CD8-positive, alpha-beta T cell (primary cell): ENCODE measurements at regions of chr18 and their contacts with region 1.

Region 1: DNA sequence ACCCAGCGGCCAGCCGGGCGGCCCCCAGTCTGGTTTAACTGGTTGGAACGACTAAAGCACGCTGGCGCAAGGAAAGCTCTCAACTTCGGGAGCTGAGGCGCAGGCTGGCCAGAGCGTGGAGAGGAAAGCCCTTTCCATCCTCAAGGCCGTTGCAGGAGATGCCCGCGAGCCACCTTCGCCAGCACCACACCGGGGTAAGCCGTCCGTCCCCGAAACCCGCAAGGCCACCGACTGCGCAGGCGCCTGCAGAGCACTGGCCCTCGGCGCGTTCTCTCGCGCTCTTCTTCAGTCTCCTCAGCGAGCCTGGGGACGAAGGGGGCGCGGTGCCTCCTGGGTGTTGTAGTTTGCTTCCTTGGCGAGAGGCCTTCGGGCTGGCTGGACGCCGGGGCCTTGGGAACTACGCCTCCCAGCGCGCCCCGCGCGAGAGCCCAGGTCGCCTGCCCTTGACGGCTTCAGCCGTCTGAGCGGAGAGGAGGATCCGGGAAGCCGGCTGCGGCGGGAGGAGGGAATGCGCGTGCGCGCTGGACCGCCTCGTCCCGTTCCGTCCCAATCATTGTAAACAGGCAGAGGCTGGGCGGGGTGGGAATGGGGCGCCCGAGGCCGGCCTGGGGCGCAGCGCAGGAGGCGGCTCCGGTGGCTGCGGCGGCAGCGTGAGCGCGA is at the start of gene RALBP1:
- DNase-seq: peak; percentile 96 to 99 (median 97)
- ATAC-seq: peak; percentile 98
- H3K4me3 ChIP-seq: peak within 1 kb of the TSS; percentile 90 to 93
- H3K4me3 Mint-ChIP-seq: peak within 1 kb of the TSS; percentile 98
- H3K27ac ChIP-seq: peak within 1 kb of the TSS; percentile 67 to 86
- H3K27ac Mint-ChIP-seq: peak within 1 kb of the TSS; percentile 97
- H3K4me1 ChIP-seq: peaks cover 9% of the 10 kb centered on the region
- H3K4me1 Mint-ChIP-seq: peaks cover 38% of the 10 kb centered on the region
- H3K27me3 ChIP-seq: no peaks in the 10 kb centered on the region
- H3K27me3 Mint-ChIP-seq: peaks cover 5% of the 10 kb centered on the region
- CTCF ChIP-seq: no peak
- total RNA-seq, gene RALBP1: 5.4 to 7.9 TPM

Region 2: DNA sequence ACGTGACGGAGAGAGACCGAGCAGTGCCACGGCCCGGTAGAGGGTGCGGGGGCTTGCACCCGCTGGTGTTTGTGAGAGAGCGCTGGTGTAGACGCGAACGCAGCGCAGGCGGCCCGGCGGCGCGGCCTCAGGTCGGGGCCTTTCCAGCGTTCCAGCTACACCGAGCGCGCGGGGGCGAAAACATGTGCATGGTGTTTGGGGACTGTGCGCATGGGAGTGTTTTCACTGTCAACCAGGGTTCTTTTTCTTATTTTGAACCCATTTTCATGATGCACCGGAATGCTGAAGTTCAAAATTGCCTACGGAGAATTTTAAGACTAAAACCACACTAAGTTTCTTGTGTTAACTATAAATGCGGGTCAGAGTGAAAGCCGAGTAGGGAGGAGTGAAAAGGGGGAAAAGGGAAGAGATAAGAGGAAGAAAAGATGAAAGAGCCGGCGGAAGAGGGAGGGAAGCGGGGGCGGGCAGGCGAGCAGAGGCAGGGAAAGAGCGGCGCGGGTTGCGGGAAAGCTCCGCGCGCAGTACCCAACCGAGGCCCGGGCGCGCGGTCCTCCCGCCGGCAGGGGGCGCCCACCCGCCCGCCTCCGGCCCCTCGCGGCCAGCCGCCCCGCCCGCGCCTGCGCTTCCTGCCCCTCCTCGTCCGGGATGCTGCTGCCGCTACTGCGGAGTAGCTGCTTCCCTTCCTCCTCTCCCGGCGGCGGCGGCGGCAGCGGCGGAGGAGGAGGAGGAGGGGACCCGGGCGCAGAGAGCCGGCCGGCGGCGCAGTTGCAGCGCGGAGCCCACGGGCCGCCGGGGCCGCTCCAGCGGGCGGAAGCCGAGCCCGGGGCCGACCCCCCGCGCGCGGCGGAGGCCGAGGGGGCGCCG is 866.1 kb before region 1 on chr18 and contains the start of gene RAB12:
- CTCF ChIA-PET with region 1: no interaction called
- POLR2A ChIA-PET with region 1: no interaction called
- intact Hi-C with region 1: loop called in 1 of 2 experiments (anchors 5 kb)
- DNase-seq: peak; percentile 72 to 93 (median 88)
- ATAC-seq: peak; percentile 92
- H3K4me3 ChIP-seq: peak within 1 kb of the TSS; percentile 64 to 70
- H3K4me3 Mint-ChIP-seq: peak within 1 kb of the TSS; percentile 90
- H3K27ac ChIP-seq: peak within 1 kb of the TSS; percentile 53 to 70
- H3K27ac Mint-ChIP-seq: peak within 1 kb of the TSS; percentile 90
- H3K4me1 ChIP-seq: peaks cover 42% of the 10 kb centered on the region
- H3K4me1 Mint-ChIP-seq: peaks cover 50% of the 10 kb centered on the region
- H3K27me3 ChIP-seq: no peaks in the 10 kb centered on the region
- H3K27me3 Mint-ChIP-seq: no peaks in the 10 kb centered on the region
- CTCF ChIP-seq: peak; percentile 70
- total RNA-seq, gene RAB12: 20.2 to 20.9 TPM

Region 3: GRCh38 chr18:9102508-9103375 is 372.4 kb before region 1 on chr18 and contains the start of gene NDUFV2:
- CTCF ChIA-PET with region 1: no interaction called
- POLR2A ChIA-PET with region 1: no interaction called
- intact Hi-C with region 1: loop called (anchors 1 to 5 kb)
- DNase-seq: peak; percentile 96 to 99 (median 98)
- ATAC-seq: peak; percentile 95
- H3K4me3 ChIP-seq: peak within 1 kb of the TSS; percentile 55 to 82
- H3K4me3 Mint-ChIP-seq: peak within 1 kb of the TSS; percentile 89
- H3K27ac ChIP-seq: peak within 1 kb of the TSS; percentile 69 to 87
- H3K27ac Mint-ChIP-seq: peak within 1 kb of the TSS; percentile 94
- H3K4me1 ChIP-seq: peaks cover 46% of the 10 kb centered on the region
- H3K4me1 Mint-ChIP-seq: peaks cover 60% of the 10 kb centered on the region
- H3K27me3 ChIP-seq: no peaks in the 10 kb centered on the region
- H3K27me3 Mint-ChIP-seq: no peaks in the 10 kb centered on the region
- CTCF ChIP-seq: no peak
- total RNA-seq, gene NDUFV2: 229 to 249 TPM

Region 4: DNA sequence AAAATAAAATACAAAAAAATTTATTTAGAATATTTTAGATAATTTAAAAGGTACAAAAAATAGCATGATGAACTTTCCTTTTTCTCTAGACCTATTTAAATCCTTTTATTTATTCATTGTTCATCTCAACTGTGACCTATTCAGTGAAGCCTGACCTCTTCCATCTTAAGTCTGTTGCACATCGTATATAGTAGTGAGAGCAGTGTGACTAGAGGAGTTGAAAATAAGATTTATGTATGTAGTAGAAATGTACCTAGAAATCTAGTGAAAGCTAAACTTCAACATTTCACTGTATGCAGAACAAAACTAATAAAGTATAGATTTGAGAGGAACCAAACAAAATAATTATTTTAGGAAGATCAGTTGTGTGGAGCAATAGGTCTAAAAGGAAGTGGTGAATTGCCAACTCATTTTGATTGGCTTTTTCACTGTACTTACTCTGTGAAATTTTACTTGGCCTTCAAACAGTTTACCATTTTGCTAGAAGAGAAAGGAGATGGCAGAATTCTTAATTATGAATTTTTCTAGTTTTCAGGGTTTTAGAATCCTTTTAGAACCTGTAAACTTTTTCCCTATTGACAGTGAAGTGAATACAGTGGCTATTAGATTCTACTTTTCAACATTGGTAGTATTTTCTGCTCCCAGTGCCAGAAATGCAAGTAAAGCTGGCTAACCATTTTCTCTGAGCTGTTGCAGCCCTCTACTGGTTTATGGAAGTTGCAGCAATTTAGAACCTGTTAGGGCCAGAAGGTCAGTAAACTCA is 327.5 kb before region 1 on chr18:
- CTCF ChIA-PET with region 1: no interaction called
- POLR2A ChIA-PET with region 1: no interaction called
- intact Hi-C with region 1: loop called in 1 of 2 experiments (anchors 10 kb)
- DNase-seq: peak in 4 of 9 experiments; percentile 22 to 82 (median 52)
- ATAC-seq: peak; percentile 76
- H3K4me3 ChIP-seq: no peak overlapping the region
- H3K4me3 Mint-ChIP-seq: no peak overlapping the region
- H3K27ac ChIP-seq: peak overlapping the region in 1 of 2 experiments; percentile 63
- H3K27ac Mint-ChIP-seq: peak overlapping the region; percentile 84
- H3K4me1 ChIP-seq: peaks cover 45% of the 10 kb centered on the region
- H3K4me1 Mint-ChIP-seq: peaks cover 77% of the 10 kb centered on the region
- H3K27me3 ChIP-seq: no peaks in the 10 kb centered on the region
- H3K27me3 Mint-ChIP-seq: no peaks in the 10 kb centered on the region
- CTCF ChIP-seq: peak; percentile 71

Region 5: GRCh38 chr18:9275890-9276289 is 199.2 kb before region 1 on chr18:
- CTCF ChIA-PET with region 1: no interaction called
- POLR2A ChIA-PET with region 1: no interaction called
- intact Hi-C with region 1: loop called in 1 of 2 experiments (anchors 10 kb)
- DNase-seq: no peak
- ATAC-seq: no peak
- H3K4me3 ChIP-seq: no peak overlapping the region
- H3K4me3 Mint-ChIP-seq: no peak overlapping the region
- H3K27ac ChIP-seq: no peak overlapping the region
- H3K27ac Mint-ChIP-seq: peak overlapping the region; percentile 27
- H3K4me1 ChIP-seq: no peaks in the 10 kb centered on the region
- H3K4me1 Mint-ChIP-seq: peaks cover 2% of the 10 kb centered on the region
- H3K27me3 ChIP-seq: no peaks in the 10 kb centered on the region
- H3K27me3 Mint-ChIP-seq: no peaks in the 10 kb centered on the region
- CTCF ChIP-seq: no peak

Region 6: DNA sequence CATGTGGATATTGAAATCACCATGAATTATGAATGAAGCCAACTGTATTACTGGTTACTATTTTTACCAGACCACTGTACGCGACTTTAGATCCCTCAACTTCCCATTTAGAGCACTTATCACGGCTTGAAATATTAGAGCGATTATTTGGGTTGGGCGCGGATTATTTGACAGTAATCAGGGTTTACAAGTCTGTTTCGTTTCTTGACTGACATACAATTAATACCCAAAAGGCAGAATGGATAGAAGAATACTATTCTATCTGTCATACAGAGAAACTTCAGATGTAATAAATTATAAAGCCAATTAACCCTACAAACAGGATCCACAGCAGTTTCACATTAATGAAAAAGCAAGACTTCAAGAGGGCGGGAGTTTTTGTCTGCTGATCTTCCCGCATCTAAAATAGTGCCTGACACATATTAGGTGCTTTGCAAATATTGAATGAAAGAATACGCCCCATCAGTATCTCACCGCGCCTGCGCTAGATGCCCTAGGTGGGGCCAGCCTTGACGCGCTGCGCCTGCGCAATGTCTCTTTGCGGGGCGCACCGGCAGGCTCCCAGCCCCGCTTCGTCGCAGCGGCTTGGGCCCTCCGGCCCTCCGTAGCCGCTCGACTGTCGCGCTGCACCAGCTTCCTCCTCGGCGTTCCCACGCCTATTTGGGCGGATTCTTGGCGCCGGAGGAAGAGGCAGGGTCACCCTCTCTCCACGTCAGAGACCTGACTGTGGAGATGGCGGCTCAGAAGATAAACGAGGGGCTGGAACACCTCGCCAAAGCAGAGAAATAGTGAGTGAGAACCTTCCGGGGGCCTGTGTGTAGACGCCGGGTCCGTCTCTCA is 1050.5 kb after region 1 on chr18 and contains the start of gene NAPG:
- CTCF ChIA-PET with region 1: no interaction called
- POLR2A ChIA-PET with region 1: no interaction called
- intact Hi-C with region 1: loop called in 1 of 2 experiments (anchors 5 kb)
- DNase-seq: peak; percentile 78 to 97 (median 88)
- ATAC-seq: peak; percentile 86
- H3K4me3 ChIP-seq: peak within 1 kb of the TSS; percentile 90 to 98
- H3K4me3 Mint-ChIP-seq: peak within 1 kb of the TSS; percentile 97
- H3K27ac ChIP-seq: peak within 1 kb of the TSS; percentile 75 to 87
- H3K27ac Mint-ChIP-seq: peak within 1 kb of the TSS; percentile 96
- H3K4me1 ChIP-seq: peaks cover 31% of the 10 kb centered on the region
- H3K4me1 Mint-ChIP-seq: peaks cover 50% of the 10 kb centered on the region
- H3K27me3 ChIP-seq: no peaks in the 10 kb centered on the region
- H3K27me3 Mint-ChIP-seq: no peaks in the 10 kb centered on the region
- CTCF ChIP-seq: no peak
- total RNA-seq, gene NAPG: 33.2 to 35.8 TPM